Colonic mucosa (tissue), 4 donors: ENCODE measurements at regions of chr5 and their contacts with region 1.

Region 1: DNA sequence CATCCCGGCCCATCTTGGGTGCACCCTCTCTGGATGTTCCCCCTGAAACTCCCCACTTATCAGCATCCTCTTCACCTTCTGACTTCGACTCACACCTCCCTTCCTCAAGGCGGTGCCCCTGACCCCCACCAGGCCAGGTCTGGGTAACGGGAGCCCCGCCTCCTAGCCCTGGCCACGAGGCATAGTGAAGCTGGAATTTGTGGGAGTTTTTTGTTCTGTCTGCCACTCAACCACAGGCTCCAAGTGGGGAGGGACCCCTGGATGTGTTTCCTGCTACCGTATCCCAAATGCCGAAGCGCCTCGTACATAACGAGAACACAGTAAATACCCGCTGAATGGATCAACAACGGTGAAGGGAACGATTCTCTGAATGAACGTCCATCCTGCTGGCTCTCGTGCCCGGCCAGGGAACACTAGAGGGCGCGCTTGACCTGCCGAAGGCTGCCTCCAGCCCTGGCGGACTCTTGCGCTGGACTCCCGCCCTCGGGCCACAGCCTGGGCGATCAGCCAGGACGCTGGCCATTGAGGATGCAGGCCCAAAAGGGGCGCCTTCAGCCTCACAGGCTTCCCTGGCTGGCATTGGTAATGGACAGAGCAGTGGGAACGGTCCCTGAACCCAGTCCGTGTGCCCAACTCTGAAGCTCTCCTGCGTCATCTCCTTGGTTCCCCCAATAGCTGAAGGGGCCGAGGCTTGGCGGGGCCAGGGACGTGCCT is 47.3 kb upstream of the PHYKPL start:
- DNase-seq: peak; percentile 82
- H3K4me3 ChIP-seq: no peak overlapping the region
- H3K27ac ChIP-seq: no peak overlapping the region
- H3K4me1 ChIP-seq: no peaks in the 10 kb centered on the region
- H3K27me3 ChIP-seq: no peaks in the 10 kb centered on the region
- CTCF ChIP-seq: peak; percentile 87

Region 2: GRCh38 chr5:178194026-178194425 is 85.9 kb before region 1 on chr5:
- intact Hi-C with region 1: no loop called
- DNase-seq: no peak
- H3K4me3 ChIP-seq: no peak overlapping the region
- H3K27ac ChIP-seq: no peak overlapping the region
- H3K4me1 ChIP-seq: no peaks in the 10 kb centered on the region
- H3K27me3 ChIP-seq: no peaks in the 10 kb centered on the region
- CTCF ChIP-seq: no peak

Region 3: DNA sequence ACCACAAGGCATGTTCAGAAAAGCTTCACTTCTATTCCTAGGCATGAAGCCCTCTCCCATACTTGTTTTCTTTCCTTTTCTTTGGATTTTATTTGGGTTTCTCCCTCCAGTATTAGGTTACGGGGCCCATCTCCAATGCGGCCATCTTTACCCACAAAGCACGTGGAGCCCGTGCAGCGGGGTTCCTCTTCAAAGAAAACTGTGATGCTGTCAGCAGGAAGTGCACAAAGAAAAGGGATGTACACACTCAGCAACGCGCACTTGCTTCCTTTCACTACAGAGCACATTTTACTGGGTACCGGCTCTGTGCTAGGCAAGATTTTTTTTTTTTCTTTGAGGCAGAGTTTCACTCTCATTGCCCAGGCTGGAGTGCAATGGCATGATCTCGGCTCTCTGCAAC is 203.7 kb after region 1 on chr5:
- intact Hi-C with region 1: no loop called
- DNase-seq: no peak
- H3K4me3 ChIP-seq: no peak overlapping the region
- H3K27ac ChIP-seq: no peak overlapping the region
- H3K4me1 ChIP-seq: no peaks in the 10 kb centered on the region
- H3K27me3 ChIP-seq: no peaks in the 10 kb centered on the region
- CTCF ChIP-seq: no peak

Region 4: GRCh38 chr5:178551059-178551458 is 271.2 kb after region 1 on chr5:
- intact Hi-C with region 1: loop called (anchors 2 kb)
- DNase-seq: no peak
- H3K4me3 ChIP-seq: no peak overlapping the region
- H3K27ac ChIP-seq: no peak overlapping the region
- H3K4me1 ChIP-seq: no peaks in the 10 kb centered on the region
- H3K27me3 ChIP-seq: no peaks in the 10 kb centered on the region
- CTCF ChIP-seq: peak; percentile 25

Region 5: GRCh38 chr5:178590141-178590923 is 310.4 kb after region 1 on chr5 and contains the start of gene COL23A1:
- intact Hi-C with region 1: loop called (anchors 5 kb)
- DNase-seq: peak; percentile 36
- H3K4me3 ChIP-seq: peak within 1 kb of the TSS; percentile 42
- H3K27ac ChIP-seq: no peak within 1 kb of the TSS
- H3K4me1 ChIP-seq: no peaks in the 10 kb centered on the region
- H3K27me3 ChIP-seq: peaks cover 33% of the 10 kb centered on the region
- CTCF ChIP-seq: peak; percentile 41
- total RNA-seq, gene COL23A1: 0.37 to 0.49 TPM

Region 6: DNA sequence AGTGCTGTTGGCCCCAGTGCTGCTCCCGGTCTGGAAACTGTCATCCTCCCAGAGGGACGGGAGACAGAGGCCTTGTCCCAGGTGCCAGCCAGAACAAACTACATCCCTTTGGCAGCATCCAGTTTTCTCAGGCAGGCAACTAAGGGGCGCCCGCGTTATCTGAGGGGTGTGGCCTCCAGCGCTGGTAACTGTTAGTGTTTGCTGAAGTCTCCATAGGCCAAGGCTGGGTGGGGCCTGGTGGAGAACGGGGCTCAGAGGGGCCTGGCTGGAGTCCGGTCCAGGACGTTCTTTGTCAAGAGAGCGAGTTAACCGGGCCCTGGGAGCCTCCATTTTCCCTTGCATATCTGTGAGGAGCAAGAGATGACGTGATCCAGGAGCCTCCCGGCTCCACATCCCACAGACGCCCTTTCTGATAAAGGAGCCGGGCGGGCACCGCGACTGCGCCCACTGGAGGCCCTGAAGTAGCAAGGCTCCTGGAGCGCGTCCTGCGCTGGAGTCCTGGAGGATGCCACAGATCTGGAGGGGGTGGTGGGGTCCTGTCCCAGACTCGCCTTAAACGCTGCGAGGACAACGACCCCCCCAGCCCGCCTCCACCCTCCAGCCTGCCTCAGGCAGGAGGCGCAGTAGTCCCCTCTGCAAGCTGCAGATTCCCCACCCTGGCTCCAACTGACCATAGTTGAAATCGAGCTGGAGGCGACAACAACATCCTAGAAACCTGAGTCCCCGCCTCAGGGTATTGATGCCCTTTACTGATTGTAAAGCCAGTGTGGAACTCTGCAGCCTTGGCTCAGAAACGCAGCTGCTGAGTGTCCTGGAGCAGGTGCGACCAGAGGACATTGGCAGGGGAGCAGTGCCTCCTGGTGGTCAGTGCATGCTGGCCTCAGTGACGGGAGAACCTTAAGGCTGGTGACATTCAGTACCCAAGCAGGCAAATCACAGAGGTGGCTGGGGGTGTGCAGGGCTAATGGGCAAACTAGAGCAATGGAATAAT is 559.1 kb after region 1 on chr5:
- intact Hi-C with region 1: loop called (anchors 5 kb)
- DNase-seq: peak; percentile 62
- H3K4me3 ChIP-seq: no peak overlapping the region
- H3K27ac ChIP-seq: no peak overlapping the region
- H3K4me1 ChIP-seq: no peaks in the 10 kb centered on the region
- H3K27me3 ChIP-seq: no peaks in the 10 kb centered on the region
- CTCF ChIP-seq: peak; percentile 46